Activated T-helper 2 cell treated with anti-CD3 and anti-CD28 coated beads, Interferon-gamma antibody, Interleukin-2, Interleukin-4, amounts not matched to agents 10 μg/mL and 5 μg/mL and 100 μg/mL, durations not matched to agents 14 hours and 24 hours and 36 hours (primary cell): ENCODE measurements at regions of chr12 and their contacts with region 1.

Region 1: DNA sequence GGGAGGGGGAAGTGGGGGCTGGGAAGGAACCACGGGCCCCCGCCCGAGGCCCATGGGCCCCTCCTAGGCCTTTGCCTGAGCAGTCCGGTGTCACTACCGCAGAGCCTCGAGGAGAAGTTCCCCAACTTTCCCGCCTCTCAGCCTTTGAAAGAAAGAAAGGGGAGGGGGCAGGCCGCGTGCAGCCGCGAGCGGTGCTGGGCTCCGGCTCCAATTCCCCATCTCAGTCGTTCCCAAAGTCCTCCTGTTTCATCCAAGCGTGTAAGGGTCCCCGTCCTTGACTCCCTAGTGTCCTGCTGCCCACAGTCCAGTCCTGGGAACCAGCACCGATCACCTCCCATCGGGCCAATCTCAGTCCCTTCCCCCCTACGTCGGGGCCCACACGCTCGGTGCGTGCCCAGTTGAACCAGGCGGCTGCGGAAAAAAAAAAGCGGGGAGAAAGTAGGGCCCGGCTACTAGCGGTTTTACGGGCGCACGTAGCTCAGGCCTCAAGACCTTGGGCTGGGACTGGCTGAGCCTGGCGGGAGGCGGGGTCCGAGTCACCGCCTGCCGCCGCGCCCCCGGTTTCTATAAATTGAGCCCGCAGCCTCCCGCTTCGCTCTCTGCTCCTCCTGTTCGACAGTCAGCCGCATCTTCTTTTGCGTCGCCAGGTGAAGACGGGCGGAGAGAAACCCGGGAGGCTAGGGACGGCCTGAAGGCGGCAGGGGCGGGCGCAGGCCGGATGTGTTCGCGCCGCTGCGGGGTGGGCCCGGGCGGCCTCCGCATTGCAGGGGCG is at the start of gene GAPDH:
- DNase-seq: peak; percentile 87
- H3K4me3 Mint-ChIP-seq: peak within 1 kb of the TSS; percentile 94
- H3K27ac Mint-ChIP-seq: peak within 1 kb of the TSS; percentile 99
- H3K4me1 Mint-ChIP-seq: peaks cover 28% of the 10 kb centered on the region
- H3K27me3 Mint-ChIP-seq: no peaks in the 10 kb centered on the region
- total RNA-seq, gene GAPDH: 4,713 and 4,805 TPM in 2 replicates

Region 2: GRCh38 chr12:6335451-6336078 is 198.5 kb before region 1 on chr12:
- intact Hi-C with region 1: loop called (anchors 5 kb)
- DNase-seq: peak; percentile 76
- H3K4me3 Mint-ChIP-seq: no peak overlapping the region
- H3K27ac Mint-ChIP-seq: no peak overlapping the region
- H3K4me1 Mint-ChIP-seq: peaks cover 32% of the 10 kb centered on the region
- H3K27me3 Mint-ChIP-seq: no peaks in the 10 kb centered on the region

Region 3: DNA sequence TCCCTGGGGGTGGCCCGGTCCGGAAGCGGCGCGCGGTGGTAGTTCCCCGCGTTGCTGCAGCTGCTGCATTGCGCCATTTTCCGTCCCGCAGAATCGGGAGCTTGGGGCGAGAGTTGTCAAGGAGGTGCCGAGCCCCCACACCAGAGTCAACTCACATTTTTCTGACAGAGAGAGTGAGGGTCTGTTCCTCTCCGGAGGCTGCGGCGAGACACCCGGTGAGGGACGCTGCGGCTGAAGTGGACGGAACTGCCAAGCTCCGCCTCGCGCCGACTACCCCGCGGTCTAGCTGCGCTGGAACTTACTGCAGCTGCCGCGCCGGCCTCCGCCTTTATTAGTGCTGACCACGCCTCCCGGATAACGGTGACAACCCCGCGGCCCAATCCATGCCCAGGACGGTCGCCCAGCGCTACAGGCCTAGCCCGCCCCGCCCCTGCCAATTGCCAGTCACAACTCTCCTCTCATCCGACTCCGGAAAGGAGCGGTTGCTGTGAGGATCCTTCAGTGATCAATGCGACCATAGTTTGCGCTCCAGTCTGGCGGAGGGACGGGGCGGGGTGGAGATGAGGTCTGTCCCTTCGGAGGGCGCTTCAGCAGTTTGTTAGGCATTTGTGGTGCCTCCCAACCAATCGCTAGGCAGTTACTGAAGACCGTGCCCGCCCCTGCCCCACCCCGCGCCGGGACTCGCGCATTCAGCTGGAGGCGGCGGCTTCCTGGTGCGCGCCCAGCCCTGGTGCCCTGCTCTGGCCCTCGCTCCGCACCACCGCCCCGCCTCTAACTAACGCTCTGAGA is 63.5 kb before region 1 on chr12 and contains the start of gene VAMP1:
- intact Hi-C with region 1: loop called (anchors 1 kb)
- DNase-seq: peak; percentile 98
- H3K4me3 Mint-ChIP-seq: peak within 1 kb of the TSS; percentile 88
- H3K27ac Mint-ChIP-seq: peak within 1 kb of the TSS; percentile 86
- H3K4me1 Mint-ChIP-seq: peaks cover 47% of the 10 kb centered on the region
- H3K27me3 Mint-ChIP-seq: no peaks in the 10 kb centered on the region
- total RNA-seq, gene VAMP1: 38.7 and 40.7 TPM in 2 replicates

Region 4: DNA sequence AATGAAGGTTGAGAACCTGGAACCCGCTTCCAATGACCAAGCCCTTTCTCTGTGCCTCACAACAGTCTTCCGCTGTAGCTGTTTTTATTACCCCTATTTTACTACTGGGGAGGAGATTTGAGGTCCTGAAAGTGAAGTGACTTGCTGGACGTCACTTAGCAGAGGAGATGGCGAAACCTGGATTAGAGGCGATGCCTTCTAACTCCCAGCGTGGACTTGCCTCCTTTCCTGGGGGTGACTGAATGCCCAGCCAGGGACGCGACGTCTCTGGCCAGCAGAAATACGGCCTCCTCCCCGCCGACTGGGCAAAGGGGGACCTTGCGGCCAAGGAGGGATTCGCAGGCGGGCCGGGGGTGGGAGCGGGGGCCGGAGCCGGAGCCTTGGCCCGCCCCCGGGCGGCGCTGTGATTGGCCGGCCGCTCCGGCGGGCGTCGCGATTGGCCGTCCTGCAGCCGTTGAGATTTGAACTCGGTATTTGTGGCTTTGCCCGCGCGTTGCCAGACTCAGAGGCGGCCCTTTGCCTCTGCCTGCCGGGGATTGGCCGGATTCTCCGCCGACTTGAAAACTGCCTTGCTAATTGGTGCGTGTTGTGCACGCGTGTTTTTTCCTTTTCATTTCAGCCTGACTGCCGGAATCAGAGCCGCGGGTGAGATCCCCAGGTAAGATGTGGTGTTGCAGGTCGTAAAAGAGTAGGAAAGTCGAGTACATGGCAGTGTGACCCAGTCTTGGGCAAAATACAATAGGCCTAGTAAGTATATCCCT is 40.4 kb before region 1 on chr12 and contains the start of gene NCAPD2:
- intact Hi-C with region 1: loop called (anchors 1 kb)
- DNase-seq: peak; percentile 97
- H3K4me3 Mint-ChIP-seq: peak within 1 kb of the TSS; percentile 93
- H3K27ac Mint-ChIP-seq: peak within 1 kb of the TSS; percentile 97
- H3K4me1 Mint-ChIP-seq: peaks cover 29% of the 10 kb centered on the region
- H3K27me3 Mint-ChIP-seq: no peaks in the 10 kb centered on the region
- total RNA-seq, gene NCAPD2: 114 and 120 TPM in 2 replicates

Region 5: DNA sequence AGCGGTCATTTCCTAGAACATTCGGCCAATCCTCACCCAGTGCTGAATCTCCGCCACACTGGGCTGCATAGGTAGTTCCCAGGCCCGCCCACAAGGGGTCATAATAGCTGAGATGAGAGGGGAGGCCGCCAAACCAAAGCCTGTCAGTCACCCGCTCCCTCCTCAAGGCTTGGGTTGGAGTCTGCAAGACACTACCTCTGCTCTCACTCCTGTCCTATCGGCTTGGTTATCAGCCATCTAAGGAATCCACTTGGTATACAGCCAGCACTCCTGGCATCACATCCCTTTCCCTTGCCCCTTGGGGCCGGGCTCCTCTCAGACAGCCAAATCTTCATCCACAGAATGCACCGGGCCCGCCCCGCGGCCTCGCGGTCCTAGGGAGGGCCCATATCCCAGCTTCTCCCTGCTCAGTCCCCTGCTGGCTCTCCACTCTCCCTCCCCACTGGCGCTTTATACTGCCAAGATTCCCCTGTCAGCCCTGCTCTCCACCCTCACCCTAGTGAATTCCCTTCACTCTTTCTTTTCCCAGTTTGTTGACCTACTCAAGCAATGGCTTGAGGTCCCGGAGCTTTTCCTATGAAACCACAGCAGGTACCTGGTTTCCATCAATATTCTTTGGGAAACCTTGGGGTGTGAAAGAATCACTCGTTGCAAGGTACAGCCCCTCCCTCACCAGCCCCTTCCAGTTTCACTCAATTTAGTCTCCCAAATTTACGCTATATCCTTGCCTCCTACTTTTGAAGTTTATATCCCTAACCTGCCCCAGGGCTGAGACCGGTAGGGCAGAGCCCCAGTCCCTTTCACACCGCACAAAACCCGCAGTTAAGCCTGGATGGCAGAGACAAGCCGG is 20.3 kb after region 1 on chr12:
- intact Hi-C with region 1: loop called (anchors 2 kb)
- DNase-seq: peak; percentile 51
- H3K4me3 Mint-ChIP-seq: peak overlapping the region; percentile 90
- H3K27ac Mint-ChIP-seq: peak overlapping the region; percentile 17
- H3K4me1 Mint-ChIP-seq: peaks cover 32% of the 10 kb centered on the region
- H3K27me3 Mint-ChIP-seq: no peaks in the 10 kb centered on the region

Region 6: DNA sequence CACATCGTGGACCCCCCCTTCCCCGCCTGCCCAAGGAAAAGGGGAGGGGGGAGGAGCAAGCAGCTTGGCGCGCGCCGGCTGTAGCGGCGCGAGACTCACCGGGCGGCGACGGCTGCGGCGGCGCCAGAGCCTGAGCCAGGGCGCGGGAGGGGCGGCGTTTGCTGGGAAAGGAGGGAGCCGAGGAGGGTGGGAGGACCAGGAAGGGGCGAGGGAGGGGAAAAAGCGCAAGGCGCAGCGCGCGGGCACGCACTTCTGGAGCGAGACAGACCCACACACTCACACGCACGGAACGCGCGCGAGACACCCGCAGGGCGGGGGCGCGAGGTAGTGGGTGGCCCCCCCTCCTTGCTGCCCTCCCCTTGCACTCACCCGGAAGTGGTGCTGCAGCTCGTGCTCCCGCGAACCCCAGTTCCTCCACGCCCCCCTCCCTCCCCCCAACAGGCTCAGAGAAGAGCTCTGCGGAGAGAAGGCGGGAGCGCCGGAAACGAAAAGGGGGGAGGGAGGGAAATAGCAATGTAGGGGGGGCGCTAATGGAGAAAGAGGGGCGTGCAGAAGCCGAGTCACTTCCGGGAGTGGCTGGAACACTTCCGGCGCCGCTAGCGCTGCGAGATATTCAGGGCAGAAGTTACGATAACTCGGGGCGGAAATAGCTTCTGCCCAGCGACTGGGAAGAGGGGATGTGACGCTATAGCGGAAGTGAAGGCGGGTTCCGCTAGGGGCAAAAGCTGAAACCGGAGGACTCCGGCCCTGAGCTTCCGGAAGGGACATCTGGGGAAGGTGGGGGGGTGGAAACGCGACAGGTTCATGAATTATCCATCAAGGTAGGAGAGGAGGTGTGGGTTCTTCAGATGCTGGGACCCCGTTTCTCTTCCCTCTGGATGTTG is 155.1 kb after region 1 on chr12 and contains the start of gene ZNF384:
- intact Hi-C with region 1: no loop called
- DNase-seq: peak; percentile 95
- H3K4me3 Mint-ChIP-seq: peak within 1 kb of the TSS; percentile 96
- H3K27ac Mint-ChIP-seq: peak within 1 kb of the TSS; percentile 92
- H3K4me1 Mint-ChIP-seq: peaks cover 35% of the 10 kb centered on the region
- H3K27me3 Mint-ChIP-seq: no peaks in the 10 kb centered on the region
- total RNA-seq, gene ZNF384: 73.7 and 75.4 TPM in 2 replicates

Region 7: DNA sequence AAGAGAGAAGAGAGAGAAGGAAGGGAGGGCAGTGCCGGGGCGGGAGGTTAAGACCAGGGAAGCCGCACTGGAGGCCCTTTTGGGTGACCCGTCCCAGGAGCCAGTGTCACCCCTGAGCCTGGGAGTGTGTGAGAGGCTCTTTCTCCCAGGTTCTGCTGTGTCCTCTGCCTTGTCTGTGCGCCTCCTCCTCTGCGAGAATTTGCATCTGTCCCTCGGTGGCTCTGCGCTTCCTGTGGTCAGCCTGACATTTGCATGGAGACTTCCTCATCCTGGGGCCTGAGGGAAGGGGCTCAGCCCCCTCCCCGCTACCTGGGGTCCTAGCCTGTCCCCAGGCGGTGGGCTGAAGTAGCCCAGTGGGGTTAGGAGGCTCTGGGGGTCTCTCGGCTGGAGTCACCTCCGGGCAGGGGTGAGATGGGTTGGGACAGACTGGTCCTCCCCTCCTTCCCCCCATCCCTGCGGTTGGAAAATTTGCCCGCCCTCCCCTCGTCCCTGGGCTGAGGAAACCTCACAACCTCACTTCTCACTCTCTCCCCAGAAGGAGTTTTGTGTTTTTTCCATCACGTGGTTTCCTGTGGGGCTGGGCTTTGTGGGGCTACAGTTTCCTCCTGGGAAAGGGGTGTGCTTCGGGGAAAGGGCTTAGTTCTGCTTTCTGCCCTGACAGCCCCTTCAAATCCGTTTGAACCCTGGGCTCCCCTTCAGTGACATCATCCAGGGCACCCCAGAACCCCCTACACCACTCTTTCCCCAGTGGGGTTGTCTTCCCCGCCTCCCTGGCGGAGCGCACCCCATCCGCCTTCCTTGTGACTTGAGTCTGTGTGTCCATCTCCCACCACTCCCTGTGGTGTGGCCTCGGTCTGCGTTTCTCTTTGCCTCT is 419.6 kb after region 1 on chr12:
- intact Hi-C with region 1: loop called (anchors 5 kb)
- DNase-seq: peak; percentile 79
- H3K4me3 Mint-ChIP-seq: peak overlapping the region; percentile 94
- H3K27ac Mint-ChIP-seq: peak overlapping the region; percentile 97
- H3K4me1 Mint-ChIP-seq: peaks cover 74% of the 10 kb centered on the region
- H3K27me3 Mint-ChIP-seq: no peaks in the 10 kb centered on the region